ENCODE measurements at regions of chr4 and their contacts with region 1.

Region 1: GRCh38 chr4:78938868-78939666 is at the start of gene PAQR3:
- DNase-seq: peak; percentile 85
- H3K4me3 Mint-ChIP-seq: peak within 1 kb of the TSS; percentile 95
- H3K27ac Mint-ChIP-seq: no peak within 1 kb of the TSS
- H3K4me1 Mint-ChIP-seq: peaks cover 36% of the 10 kb centered on the region
- H3K27me3 Mint-ChIP-seq: peaks cover 12% of the 10 kb centered on the region
- total RNA-seq, gene PAQR3: 6.9 to 10.2 TPM

Region 2: GRCh38 chr4:78656968-78657445 is 282.1 kb before region 1 on chr4:
- CTCF ChIA-PET with region 1: no interaction called
- POLR2A ChIA-PET with region 1: interaction called, 3 read pairs
- intact Hi-C with region 1: loop called (anchors 5 kb)
- DNase-seq: peak; percentile 25
- H3K4me3 Mint-ChIP-seq: peak overlapping the region; percentile 28
- H3K27ac Mint-ChIP-seq: peak overlapping the region; percentile 19
- H3K4me1 Mint-ChIP-seq: peaks cover 30% of the 10 kb centered on the region
- H3K27me3 Mint-ChIP-seq: peaks cover 2% of the 10 kb centered on the region

Region 3: GRCh38 chr4:78775303-78776030 is 163.6 kb before region 1 on chr4:
- CTCF ChIA-PET with region 1: no interaction called
- POLR2A ChIA-PET with region 1: no interaction called
- intact Hi-C with region 1: loop called (anchors 2 kb)
- DNase-seq: peak; percentile 90
- H3K4me3 Mint-ChIP-seq: peak overlapping the region; percentile 93
- H3K27ac Mint-ChIP-seq: peak overlapping the region; percentile 91
- H3K4me1 Mint-ChIP-seq: peaks cover 22% of the 10 kb centered on the region
- H3K27me3 Mint-ChIP-seq: no peaks in the 10 kb centered on the region

Region 4: GRCh38 chr4:78960926-78961325 is 21.9 kb after region 1 on chr4:
- CTCF ChIA-PET with region 1: no interaction called
- POLR2A ChIA-PET with region 1: no interaction called
- intact Hi-C with region 1: no loop called
- DNase-seq: no peak
- H3K4me3 Mint-ChIP-seq: no peak overlapping the region
- H3K27ac Mint-ChIP-seq: no peak overlapping the region
- H3K4me1 Mint-ChIP-seq: no peaks in the 10 kb centered on the region
- H3K27me3 Mint-ChIP-seq: peaks cover 8% of the 10 kb centered on the region

Region 5: DNA sequence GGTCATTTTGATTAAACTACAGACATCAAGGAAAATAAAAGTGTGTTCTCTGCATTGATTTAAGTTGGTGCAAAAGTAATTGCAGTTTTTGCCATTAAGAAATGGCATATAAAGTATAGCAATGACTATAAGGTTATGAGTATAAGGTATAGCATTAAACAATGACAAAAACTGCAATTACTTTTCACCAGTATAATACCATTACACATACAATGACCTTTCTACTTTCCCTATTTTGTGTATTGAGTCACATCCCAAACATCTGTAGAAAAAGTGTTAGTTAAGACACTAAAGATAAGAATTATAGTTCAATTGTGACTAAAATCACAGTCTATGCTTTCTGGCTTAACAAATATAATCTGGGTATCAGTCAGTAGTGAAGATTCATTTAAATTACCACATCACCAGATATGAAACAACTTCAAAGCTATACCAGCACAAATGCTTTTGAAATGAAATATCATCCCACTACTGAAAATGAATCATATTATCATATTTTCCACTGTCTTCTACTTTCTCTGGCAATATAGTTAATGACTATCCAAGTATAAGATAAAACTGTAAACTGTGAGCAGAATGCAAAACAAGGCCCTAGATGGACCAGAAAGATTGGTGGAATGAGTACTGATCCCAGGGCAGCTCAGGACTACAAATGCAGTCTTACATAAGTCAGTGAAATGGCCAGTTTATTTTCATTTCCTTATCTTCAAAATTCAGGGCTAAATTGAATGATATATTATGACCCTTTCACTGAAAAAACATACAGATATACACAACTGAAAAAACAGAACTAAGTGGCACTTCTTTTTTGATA is 892.8 kb after region 1 on chr4:
- CTCF ChIA-PET with region 1: no interaction called
- POLR2A ChIA-PET with region 1: no interaction called
- intact Hi-C with region 1: loop called (anchors 10 kb)
- DNase-seq: no peak
- H3K4me3 Mint-ChIP-seq: no peak overlapping the region
- H3K27ac Mint-ChIP-seq: no peak overlapping the region
- H3K4me1 Mint-ChIP-seq: peaks cover 9% of the 10 kb centered on the region
- H3K27me3 Mint-ChIP-seq: peaks cover 8% of the 10 kb centered on the region

Region 6: DNA sequence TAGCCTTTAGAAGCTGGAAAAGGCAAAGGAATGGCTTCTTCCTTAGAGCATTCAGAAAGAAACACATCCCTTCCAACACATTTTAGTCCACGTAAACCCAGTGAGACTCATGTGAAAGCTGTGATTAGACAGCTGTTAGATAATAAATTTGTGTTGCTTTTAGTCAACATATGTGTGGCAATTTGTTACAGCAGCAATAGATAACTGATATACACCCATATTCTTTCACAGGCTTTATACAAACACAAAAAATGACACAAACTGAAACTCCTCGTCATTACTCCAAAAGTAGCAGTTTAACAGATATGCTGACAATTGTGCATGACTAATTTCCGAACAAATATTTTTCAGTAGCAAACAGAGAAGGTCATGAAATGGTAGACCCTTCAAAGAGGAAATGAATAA is 1068.7 kb after region 1 on chr4:
- CTCF ChIA-PET with region 1: no interaction called
- POLR2A ChIA-PET with region 1: no interaction called
- intact Hi-C with region 1: loop called (anchors 5 kb)
- DNase-seq: no peak
- H3K4me3 Mint-ChIP-seq: peak overlapping the region; percentile 20
- H3K27ac Mint-ChIP-seq: peak overlapping the region; percentile 87
- H3K4me1 Mint-ChIP-seq: peaks cover 64% of the 10 kb centered on the region
- H3K27me3 Mint-ChIP-seq: no peaks in the 10 kb centered on the region